PC-9 (cell line): ENCODE measurements at regions of chr12 and their contacts with region 1.

Region 1: DNA sequence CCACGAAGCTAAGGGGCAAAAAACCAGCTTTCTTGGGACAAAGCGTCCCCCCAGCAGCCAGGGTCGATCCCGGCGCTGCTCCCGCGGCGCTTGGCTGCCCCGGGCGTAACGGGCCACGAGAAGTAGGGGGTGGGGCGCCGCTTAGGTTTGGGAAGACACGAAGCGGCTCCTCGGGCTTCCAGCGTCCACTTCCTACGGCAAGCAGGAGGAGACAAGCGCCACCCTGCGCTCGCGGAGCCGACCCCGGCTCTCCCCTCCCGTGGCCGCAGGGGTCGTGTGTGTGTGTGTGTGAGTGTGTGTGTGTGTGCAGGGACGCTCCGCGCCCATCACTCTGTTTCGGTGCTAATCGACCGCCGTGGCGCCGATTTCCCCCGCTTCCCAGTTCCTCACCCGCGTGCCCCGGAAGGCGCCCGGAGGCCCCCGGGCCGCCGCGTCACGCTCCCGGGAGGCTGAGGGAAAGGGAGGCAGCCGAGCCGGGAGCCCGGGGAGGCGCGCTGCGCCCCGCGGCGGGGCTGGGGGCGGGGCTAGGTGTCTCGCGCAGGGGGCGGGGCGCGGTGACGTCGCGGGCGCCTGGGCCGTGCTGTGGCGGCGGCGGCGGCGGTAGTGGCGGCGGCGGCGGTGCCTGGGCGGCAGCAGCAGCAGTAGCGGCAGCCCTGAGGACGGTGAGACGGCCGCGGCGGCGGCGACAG is at the start of gene ERC1:
- DNase-seq: peak; percentile 61 to 93
- H3K4me3 ChIP-seq: peak within 1 kb of the TSS; percentile 83
- H3K27ac ChIP-seq: peak within 1 kb of the TSS; percentile 72
- H3K4me1 ChIP-seq: peaks cover 34% of the 10 kb centered on the region
- H3K27me3 ChIP-seq: no peaks in the 10 kb centered on the region
- CTCF ChIP-seq: no peak
- total RNA-seq, gene ERC1: 47.2 and 52.0 TPM in 2 replicates

Region 2: GRCh38 chr12:1034751-1035457 is 44.1 kb after region 1 on chr12:
- CTCF ChIA-PET with region 1: no interaction called
- POLR2A ChIA-PET with region 1: no interaction called
- intact Hi-C with region 1: no loop called
- DNase-seq: no peak
- H3K4me3 ChIP-seq: no peak overlapping the region
- H3K27ac ChIP-seq: no peak overlapping the region
- H3K4me1 ChIP-seq: no peaks in the 10 kb centered on the region
- H3K27me3 ChIP-seq: no peaks in the 10 kb centered on the region
- CTCF ChIP-seq: no peak

Region 3: DNA sequence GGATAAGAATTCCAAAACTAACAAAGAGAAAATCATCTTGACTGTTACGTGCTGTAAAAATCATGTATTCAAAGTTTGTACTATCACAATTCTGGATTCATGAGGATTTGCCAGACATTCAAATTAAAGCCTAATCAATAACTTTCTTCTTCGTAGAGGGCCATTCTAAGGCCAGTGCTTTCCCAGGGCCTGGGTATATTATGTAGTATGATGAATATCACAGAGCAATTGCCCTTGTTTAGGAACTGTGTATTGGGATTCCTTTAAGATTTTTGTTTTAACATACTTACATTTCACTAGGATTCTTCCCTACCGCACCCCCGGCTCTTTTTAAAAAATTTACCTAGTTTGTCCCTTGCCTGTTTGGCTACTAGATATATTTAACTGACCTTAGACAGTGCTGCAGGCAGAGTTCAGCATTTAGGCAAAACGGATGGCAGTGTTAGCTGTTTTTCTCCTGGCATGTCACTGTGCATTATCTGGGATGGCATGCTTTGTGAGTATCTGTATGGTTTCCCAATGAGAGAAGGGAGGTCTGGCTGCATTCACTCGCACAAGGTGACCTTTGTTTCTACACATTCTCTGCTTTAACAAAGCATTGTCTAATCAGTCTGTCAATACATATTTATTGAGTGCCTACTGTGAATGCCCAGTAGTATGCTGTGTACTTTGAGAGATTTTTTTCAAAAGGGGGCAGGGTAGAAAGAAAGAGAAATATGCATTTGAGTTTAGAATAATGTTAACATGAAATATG is 63.5 kb after region 1 on chr12:
- CTCF ChIA-PET with region 1: no interaction called
- POLR2A ChIA-PET with region 1: interaction called, 15 read pairs
- intact Hi-C with region 1: no loop called
- DNase-seq: no peak
- H3K4me3 ChIP-seq: no peak overlapping the region
- H3K27ac ChIP-seq: no peak overlapping the region
- H3K4me1 ChIP-seq: no peaks in the 10 kb centered on the region
- H3K27me3 ChIP-seq: no peaks in the 10 kb centered on the region
- CTCF ChIP-seq: no peak

Region 4: DNA sequence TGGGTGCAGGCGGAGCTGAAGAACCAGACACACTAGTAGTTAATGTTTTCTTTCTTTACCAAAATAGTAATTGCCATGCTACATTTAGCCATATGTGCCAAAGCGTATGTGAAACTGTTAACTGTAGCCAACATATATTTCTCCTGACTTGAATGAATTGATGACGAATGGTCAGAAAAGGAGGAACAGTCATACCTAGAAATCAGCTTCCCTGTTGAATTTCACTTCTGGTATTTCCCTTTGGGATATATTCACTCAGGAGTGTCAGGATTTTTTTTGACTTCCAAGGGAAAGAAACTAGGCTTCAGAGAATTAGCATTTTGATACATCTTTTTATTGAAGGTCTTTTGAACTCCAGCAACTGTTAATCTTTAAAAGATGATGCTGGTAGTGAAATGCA is 87.2 kb after region 1 on chr12:
- CTCF ChIA-PET with region 1: no interaction called
- POLR2A ChIA-PET with region 1: interaction called, 10 read pairs
- intact Hi-C with region 1: no loop called
- DNase-seq: no peak
- H3K4me3 ChIP-seq: no peak overlapping the region
- H3K27ac ChIP-seq: no peak overlapping the region
- H3K4me1 ChIP-seq: no peaks in the 10 kb centered on the region
- H3K27me3 ChIP-seq: no peaks in the 10 kb centered on the region
- CTCF ChIP-seq: no peak

Region 5: DNA sequence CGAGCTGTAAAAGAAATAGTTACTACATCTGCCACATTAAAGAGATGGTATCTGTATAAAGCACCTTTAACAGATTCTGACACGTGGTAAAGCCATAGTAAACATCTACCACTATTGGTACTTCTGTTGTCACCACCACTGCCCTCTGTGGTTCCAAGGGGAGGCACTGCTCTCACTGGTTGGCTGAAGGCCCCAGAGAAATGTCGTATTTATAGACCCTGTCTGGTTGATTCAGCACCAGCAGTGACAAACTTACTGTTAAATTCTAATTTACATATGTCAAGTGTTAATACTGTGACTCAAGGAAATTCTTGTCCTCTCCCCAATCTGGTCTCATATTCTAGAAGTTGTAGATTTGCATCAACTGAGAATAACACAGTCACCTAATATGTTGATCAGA is 281.3 kb after region 1 on chr12:
- CTCF ChIA-PET with region 1: no interaction called
- POLR2A ChIA-PET with region 1: no interaction called
- intact Hi-C with region 1: no loop called
- DNase-seq: no peak
- H3K4me3 ChIP-seq: no peak overlapping the region
- H3K27ac ChIP-seq: no peak overlapping the region
- H3K4me1 ChIP-seq: no peaks in the 10 kb centered on the region
- H3K27me3 ChIP-seq: no peaks in the 10 kb centered on the region
- CTCF ChIP-seq: no peak